Heart right ventricle (tissue), 16 donors: ENCODE measurements at regions of chr5 and their contacts with region 1.

Region 1: DNA sequence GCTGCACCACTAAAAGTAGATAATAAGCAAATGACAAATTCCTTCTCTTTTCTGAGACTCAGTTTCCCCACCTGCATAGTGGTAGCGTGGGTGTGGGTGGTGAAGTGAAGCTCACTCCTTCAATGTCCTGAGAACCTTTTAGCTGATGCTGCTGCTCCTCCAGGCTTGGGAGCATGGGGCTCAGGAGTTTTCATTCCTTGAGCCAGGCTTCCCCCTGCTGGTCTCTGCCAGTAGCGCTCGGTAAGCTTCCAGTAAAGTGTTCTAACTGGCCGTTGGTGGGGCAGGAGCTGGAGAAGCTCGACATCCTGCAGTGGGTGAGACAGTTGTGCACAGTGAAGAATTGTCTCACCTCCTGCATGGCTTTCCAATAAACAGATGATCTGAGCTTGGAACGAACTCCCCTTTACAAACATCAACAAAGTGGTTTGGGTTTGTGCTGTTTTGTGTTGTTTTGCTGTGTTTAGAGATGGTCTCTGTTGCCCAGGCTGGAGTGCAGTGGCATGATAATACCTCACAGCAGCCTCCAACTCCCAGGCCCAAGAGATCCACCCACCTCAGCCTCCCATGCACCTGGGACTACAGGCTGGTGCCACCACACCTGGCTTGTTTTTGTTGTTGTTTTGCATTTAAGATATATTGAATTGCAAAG is 34.6 kb downstream of the SPARC start:
- DNase-seq: peak; percentile 78 to 81
- ATAC-seq: peak; percentile 87 to 96 (median 94)
- H3K4me3 ChIP-seq: no peak overlapping the region
- H3K27ac ChIP-seq: no peak overlapping the region
- H3K4me1 ChIP-seq: no peaks in the 10 kb centered on the region
- H3K27me3 ChIP-seq: no peaks in the 10 kb centered on the region
- CTCF ChIP-seq: peak; percentile 69 to 89 (median 86)

Region 2: DNA sequence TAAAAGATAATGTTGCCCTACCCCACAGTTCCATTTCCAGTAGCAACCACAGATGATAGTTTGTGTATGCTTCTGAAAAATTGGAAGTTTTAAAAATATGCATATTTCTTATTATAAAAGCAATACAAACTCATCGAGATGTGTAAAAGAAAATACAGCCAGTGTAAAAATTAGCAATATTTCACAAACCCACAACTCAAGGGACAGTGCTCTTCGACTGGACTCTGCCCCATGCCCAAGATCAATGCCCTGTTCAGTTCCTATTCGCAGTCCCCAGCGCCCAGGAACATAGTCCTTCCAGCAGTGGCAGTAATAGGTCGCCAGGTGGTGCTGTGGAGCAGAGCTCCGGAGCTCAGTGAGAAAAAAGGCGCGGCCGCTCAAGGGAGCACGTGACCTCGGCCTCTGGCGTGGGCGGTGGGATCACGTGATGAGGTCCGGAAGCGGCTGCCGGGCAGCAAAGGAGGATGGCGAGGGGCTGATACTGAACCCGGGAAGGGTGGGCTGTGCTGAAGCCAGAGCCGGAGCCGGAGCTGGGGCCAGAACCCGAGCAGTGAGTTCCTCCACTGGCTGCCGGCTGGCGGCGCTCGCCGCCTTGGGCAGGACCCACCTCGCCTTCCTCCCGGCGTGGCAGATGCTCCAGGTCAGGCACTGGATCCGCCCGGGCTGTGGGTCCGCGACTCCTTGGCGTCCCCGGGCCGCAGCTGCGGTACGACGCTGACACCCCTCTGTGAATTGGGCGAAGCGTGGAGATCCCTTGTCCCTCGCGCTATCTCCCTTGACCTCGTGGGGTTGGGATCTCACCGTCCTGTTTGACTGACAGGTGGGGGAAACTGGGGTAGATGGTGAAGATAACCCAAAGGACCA is 204.7 kb before region 1 on chr5 and contains the start of gene SLC36A1:
- intact Hi-C with region 1: loop called (anchors 1 to 5 kb)
- DNase-seq: peak; percentile 94 to 95
- ATAC-seq: peak; percentile 90 to 98 (median 94)
- H3K4me3 ChIP-seq: peak within 1 kb of the TSS; percentile 63 to 92 (median 80)
- H3K27ac ChIP-seq: peak within 1 kb of the TSS in 8 of 10 donors; percentile 27 to 87 (median 60)
- H3K4me1 ChIP-seq: peaks cover 0 to 30% (median 11%) of the 10 kb centered on the region in 9 donors
- H3K27me3 ChIP-seq: peaks cover 0 to 13% (median 6%) of the 10 kb centered on the region in 7 donors
- CTCF ChIP-seq: peak; percentile 96 to 99 (median 96)
- total RNA-seq, gene SLC36A1: 0.94 to 15.3 (median 2.7) TPM

Region 3: GRCh38 chr5:151499501-151500035 is 152.6 kb before region 1 on chr5:
- intact Hi-C with region 1: loop called in 1 of 10 experiments (anchors 5 kb)
- DNase-seq: no peak
- ATAC-seq: peak in 1 of 8 donors; percentile 44
- H3K4me3 ChIP-seq: no peak overlapping the region
- H3K27ac ChIP-seq: peak overlapping the region in 1 of 10 donors; percentile 31
- H3K4me1 ChIP-seq: peaks cover 0 to 23% (median 0%) of the 10 kb centered on the region in 9 donors
- H3K27me3 ChIP-seq: no peaks in the 10 kb centered on the region
- CTCF ChIP-seq: no peak

Region 4: GRCh38 chr5:151523335-151523734 is 128.8 kb before region 1 on chr5:
- intact Hi-C with region 1: loop called (anchors 1 to 10 kb)
- DNase-seq: no peak
- ATAC-seq: peak in 1 of 8 donors; percentile 11
- H3K4me3 ChIP-seq: no peak overlapping the region
- H3K27ac ChIP-seq: no peak overlapping the region
- H3K4me1 ChIP-seq: peaks cover 0 to 4% (median 0%) of the 10 kb centered on the region in 9 donors
- H3K27me3 ChIP-seq: no peaks in the 10 kb centered on the region
- CTCF ChIP-seq: peak in 7 of 9 donors; percentile 17 to 55 (median 28)